ENCODE measurements at regions of chr3 and their contacts with region 1.

Region 1: GRCh38 chr3:160935413-160936095 is 169.6 kb downstream of the B3GALNT1 start:
- DNase-seq: peak; percentile 43
- H3K4me3 Mint-ChIP-seq: no peak overlapping the region
- H3K27ac Mint-ChIP-seq: no peak overlapping the region
- H3K4me1 Mint-ChIP-seq: no peaks in the 10 kb centered on the region
- H3K27me3 Mint-ChIP-seq: no peaks in the 10 kb centered on the region
- CTCF ChIP-seq: no peak

Region 2: DNA sequence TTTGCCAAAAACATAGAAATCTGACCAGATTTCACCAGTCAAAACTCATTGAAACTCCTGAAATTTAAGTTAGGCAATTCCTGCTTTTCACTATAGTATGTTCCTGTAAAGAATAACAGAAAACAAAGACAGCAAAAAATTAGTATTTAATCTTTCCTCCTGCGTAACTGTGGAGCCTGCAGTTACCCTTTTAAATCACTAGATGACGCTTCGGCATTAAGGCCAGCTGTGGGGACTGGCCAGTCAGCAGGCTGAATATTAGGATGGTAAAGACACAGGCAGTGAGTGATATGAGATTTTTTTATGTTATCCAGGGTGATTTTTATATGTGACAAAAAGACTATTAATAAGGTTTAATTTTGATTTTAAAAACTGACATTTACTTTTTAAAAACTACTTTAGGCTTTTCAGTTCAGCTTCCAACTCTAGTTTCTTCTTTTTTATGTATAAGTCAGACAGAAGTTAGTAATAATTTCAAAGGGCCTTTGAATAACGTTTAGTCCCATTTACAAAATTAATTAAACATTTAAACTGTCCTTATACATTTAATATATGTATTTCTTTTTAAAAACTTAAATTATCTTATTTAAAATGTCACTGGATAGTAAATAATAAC is 14.4 kb before region 1 on chr3:
- CTCF ChIA-PET with region 1: interaction called, 30 read pairs
- POLR2A ChIA-PET with region 1: interaction called, 3 read pairs
- intact Hi-C with region 1: no loop called
- DNase-seq: peak; percentile 52
- H3K4me3 Mint-ChIP-seq: no peak overlapping the region
- H3K27ac Mint-ChIP-seq: no peak overlapping the region
- H3K4me1 Mint-ChIP-seq: no peaks in the 10 kb centered on the region
- H3K27me3 Mint-ChIP-seq: no peaks in the 10 kb centered on the region
- CTCF ChIP-seq: peak; percentile 71

Measured in MCF 10A (cell line).